ENCODE measurements at regions of chr4 and their contacts with region 1.

Region 1: GRCh38 chr4:118076958-118077766 is 42.9 kb downstream of the NDST3 start:
- DNase-seq: no peak
- ATAC-seq: no peak
- H3K4me3 Mint-ChIP-seq: no peak overlapping the region
- H3K27ac Mint-ChIP-seq: no peak overlapping the region
- H3K4me1 Mint-ChIP-seq: no peaks in the 10 kb centered on the region
- H3K27me3 Mint-ChIP-seq: no peaks in the 10 kb centered on the region
- CTCF ChIP-seq: no peak

Region 2: DNA sequence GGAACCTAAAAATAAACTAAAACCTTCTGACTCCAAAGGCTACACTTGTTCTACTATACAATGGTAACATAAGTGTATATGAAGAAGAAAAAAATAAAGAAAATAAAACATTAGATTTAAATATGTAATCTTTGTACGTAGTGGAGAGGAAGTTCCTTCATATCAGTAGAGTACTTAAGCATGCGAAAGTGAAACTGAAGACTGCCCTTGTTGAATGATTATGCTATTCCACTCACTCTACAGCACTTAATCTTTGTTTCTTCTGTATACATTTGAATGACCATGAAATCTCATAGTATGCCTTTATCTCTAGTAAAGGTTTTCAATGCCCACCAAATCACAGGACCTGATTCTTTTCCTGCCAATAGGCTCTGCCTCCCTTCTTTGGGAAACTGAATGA is 36.1 kb after region 1 on chr4:
- CTCF ChIA-PET with region 1: no interaction called
- POLR2A ChIA-PET with region 1: no interaction called
- intact Hi-C with region 1: no loop called
- DNase-seq: no peak
- ATAC-seq: no peak
- H3K4me3 Mint-ChIP-seq: no peak overlapping the region
- H3K27ac Mint-ChIP-seq: no peak overlapping the region
- H3K4me1 Mint-ChIP-seq: no peaks in the 10 kb centered on the region
- H3K27me3 Mint-ChIP-seq: no peaks in the 10 kb centered on the region
- CTCF ChIP-seq: no peak

Region 3: DNA sequence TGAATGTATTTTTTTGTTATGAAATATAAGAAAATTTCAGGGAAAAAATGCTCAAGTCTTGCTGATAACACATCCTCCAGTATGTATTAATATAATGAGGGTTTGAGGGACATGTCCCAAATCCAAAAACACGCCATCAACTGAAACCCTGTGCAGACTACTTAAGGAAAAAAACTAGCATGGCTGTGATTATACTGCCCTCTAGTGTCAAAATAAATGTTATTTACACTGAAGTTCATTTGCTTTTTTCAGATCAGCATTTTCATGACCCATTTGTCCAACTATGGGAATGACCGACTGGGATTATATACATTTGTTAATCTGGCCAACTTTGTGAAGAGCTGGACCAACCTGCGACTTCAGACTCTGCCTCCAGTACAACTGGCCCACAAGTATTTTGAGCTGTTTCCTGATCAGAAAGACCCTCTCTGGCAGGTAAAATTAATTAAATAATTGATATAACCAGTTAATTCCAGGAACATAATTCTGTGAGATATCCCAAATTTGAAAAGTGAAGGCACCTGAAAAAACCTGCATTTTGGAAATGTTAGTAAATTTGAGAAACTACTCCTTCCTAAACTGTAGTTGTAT is 147.2 kb after region 1 on chr4:
- CTCF ChIA-PET with region 1: no interaction called
- POLR2A ChIA-PET with region 1: no interaction called
- intact Hi-C with region 1: loop called (anchors 2 kb)
- DNase-seq: no peak
- ATAC-seq: no peak
- H3K4me3 Mint-ChIP-seq: no peak overlapping the region
- H3K27ac Mint-ChIP-seq: no peak overlapping the region
- H3K4me1 Mint-ChIP-seq: no peaks in the 10 kb centered on the region
- H3K27me3 Mint-ChIP-seq: peaks cover 2% of the 10 kb centered on the region
- CTCF ChIP-seq: peak; percentile 70

Measured in activated B cell treated with CpG ODN at 0.5 μM for 24 hours (primary cell).